A549 (cell line): ENCODE measurements at regions of chr2 and their contacts with region 1.

Region 1: GRCh38 chr2:241702132-241703031 is 543 bp downstream of the ING5 start:
- DNase-seq: peak; percentile 80 to 89
- ATAC-seq: peak; percentile 79 to 85
- H3K4me3 ChIP-seq: peak overlapping the region; percentile 91
- H3K27ac ChIP-seq: peak overlapping the region; percentile 96 to 100
- H3K4me1 ChIP-seq: peaks cover 15% of the 10 kb centered on the region
- CTCF ChIP-seq: peak; percentile 49
- EP300 ChIP-seq: no peak
- POLR2A ChIP-seq: no peak
- RAD21 ChIP-seq: no peak

Region 2: DNA sequence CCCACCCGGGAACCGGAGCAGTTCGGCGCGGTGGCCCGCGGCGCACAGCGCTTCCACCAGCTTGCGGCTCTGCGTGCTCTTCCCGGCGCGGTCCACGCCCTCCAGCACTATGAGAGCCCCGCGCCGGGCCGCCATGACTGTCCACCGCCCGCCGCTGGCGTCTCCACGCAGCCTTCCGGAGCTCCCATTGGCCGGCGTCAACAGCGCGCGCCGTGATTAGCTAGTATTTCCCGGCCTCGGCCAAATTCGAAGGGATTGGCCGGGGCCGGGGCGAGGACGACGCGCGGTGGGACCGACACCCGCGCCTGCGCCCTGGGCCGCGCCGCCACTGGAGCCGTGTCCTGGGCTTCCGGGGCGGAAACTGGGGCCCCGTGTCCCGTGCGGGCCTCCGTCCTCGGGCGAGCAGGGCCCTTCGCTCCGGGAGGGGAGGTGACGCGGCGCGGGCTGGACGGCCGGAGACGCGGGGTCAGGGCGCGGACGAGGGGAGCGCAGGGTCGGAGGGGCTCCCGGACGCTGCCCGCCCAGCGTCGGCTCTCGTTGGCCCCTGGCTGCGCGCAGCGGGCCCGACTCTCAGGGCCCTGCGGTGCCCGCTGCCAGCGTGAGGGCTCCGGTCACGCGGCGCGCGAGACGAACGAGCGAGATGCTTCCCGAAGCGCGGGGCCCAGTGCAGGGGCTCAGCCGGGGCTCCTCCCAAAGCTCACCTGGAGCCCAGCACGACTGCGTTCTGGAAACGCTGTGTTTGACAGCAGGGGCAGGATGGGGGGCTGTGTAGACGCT is 15.5 kb before region 1 on chr2 and contains the start of gene DTYMK:
- CTCF ChIA-PET with region 1: interaction called, 6 read pairs
- POLR2A ChIA-PET with region 1: interaction called, 23 read pairs
- DNase-seq: peak; percentile 96
- ATAC-seq: peak; percentile 97 to 98
- H3K4me3 ChIP-seq: peak within 1 kb of the TSS; percentile 69
- H3K27ac ChIP-seq: peak within 1 kb of the TSS; percentile 92 to 93
- H3K4me1 ChIP-seq: peaks cover 18% of the 10 kb centered on the region; the same call in 1 of the 3 replicates
- CTCF ChIP-seq: no peak
- EP300 ChIP-seq: no peak
- POLR2A ChIP-seq: peak; percentile 73
- RAD21 ChIP-seq: no peak
- polyA plus RNA-seq, gene DTYMK: 62.7 and 68.7 TPM in 2 replicates

Region 3: GRCh38 chr2:241734467-241735208 is 32.3 kb after region 1 on chr2 and contains the start of gene D2HGDH:
- CTCF ChIA-PET with region 1: interaction called, 11 read pairs
- POLR2A ChIA-PET with region 1: interaction called, 23 read pairs
- DNase-seq: peak; percentile 63 to 86
- ATAC-seq: peak; percentile 74 to 83
- H3K4me3 ChIP-seq: peak within 1 kb of the TSS; percentile 97
- H3K27ac ChIP-seq: peak within 1 kb of the TSS; percentile 99
- H3K4me1 ChIP-seq: peaks cover 5% of the 10 kb centered on the region; the same call in 1 of the 3 replicates
- CTCF ChIP-seq: no peak
- EP300 ChIP-seq: no peak
- POLR2A ChIP-seq: peak; percentile 92
- RAD21 ChIP-seq: no peak
- polyA plus RNA-seq, gene D2HGDH: 6.5 and 7.0 TPM in 2 replicates